Common myeloid progenitor, CD34-positive (primary cell): ENCODE measurements at regions of chr11 and their contacts with region 1.

Region 1: DNA sequence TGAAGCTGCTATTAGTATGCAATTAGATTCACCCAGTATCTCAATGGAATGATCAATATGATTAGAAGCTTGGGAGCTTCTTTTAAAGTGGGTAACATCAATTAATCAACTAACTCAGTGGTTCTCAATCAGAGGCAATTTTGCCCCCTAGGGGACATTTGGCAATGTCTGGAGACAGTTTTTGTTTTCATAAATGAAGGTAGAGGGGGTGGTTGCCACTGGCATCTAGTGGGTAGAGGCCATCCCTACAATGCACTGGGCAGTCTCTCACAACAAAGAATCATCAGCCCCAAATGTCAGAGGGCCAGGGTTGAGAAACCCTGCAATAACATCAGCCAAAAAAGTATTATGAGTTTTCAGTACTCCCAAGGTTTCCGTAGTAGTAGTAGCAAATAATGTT is 5.9 kb upstream of the AMOTL1 start:
- DNase-seq: peak; percentile 63 to 72 (median 70)
- H3K4me3 ChIP-seq: no peak overlapping the region
- H3K27ac ChIP-seq: no peak overlapping the region
- H3K4me1 ChIP-seq: peaks cover 0 to 6% (median 3%) of the 10 kb centered on the region in 4 experiments
- H3K27me3 ChIP-seq: no peaks in the 10 kb centered on the region

Region 2: DNA sequence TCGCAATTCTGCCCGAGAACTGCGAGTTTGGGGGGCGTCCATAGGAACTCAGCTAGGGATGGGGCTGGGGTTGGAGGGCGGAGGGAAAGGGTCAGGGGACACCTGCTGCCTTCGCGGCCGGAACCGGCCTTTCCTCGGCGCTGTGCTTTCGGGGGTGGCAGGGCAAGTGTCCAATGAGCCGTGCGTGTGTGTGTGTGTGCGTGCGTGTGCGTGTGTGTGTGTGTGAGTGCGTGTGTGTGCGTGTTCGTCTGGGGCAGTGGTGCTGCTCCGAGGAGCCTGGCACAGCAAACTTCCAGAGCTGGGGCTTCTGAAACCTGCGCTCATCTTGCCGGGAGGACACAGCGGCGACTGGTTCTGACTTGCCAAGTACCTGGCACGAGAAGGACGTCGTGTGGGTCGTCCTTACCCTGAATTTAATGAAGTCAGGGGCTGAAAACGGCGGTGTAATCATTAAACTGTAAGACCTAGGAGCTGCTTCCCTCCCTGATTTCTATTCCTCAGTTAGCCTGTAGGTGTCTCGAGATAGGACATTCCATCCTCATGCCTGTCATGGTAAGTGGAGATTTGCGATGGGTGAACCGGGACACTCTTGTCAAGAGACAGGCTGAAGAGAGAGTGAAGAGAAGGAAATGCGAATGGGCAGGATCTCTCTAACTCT is 21.1 kb before region 1 on chr11:
- CTCF ChIA-PET with region 1: interaction called, 13 read pairs
- POLR2A ChIA-PET with region 1: interaction called, 3 read pairs
- DNase-seq: peak; percentile 57 to 73 (median 68)
- H3K4me3 ChIP-seq: peak overlapping the region; percentile 17 to 79 (median 60)
- H3K27ac ChIP-seq: no peak overlapping the region
- H3K4me1 ChIP-seq: peaks cover 0 to 18% (median 16%) of the 10 kb centered on the region in 4 experiments
- H3K27me3 ChIP-seq: peaks cover 5 to 40% (median 24%) of the 10 kb centered on the region in 5 experiments